ENCODE measurements at regions of chr9 and their contacts with region 1.

Region 1: GRCh38 chr9:70470050-70471015 is 55.9 kb upstream of the KLF9 start:
- DNase-seq: no peak
- ATAC-seq: peak; percentile 91

Region 2: DNA sequence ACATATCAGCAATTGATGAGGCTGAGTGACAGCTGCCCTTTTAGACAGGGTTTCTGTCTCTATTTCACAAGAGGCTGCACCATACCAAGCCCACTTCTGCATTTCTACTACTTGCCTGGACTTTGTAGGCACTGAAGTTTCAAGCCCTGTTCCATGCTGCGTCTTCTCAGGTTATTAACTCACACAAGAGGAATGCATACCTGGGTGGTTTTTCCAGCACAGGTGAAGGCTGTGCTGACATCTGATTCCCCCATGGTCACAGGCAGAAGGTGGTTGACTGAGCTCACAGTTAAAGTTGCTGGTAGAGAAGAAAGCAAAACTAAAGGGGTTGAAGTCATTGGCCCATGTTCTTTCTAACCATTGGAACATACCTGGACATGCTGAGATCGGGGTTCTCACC is 340.1 kb before region 1 on chr9:
- intact Hi-C with region 1: no loop called
- DNase-seq: no peak
- ATAC-seq: no peak

Region 3: GRCh38 chr9:70258692-70259511 is 211.4 kb before region 1 on chr9 and contains the start of gene SMC5:
- intact Hi-C with region 1: no loop called
- DNase-seq: peak; percentile 95
- ATAC-seq: peak; percentile 98
- total RNA-seq, gene SMC5: 10.0 TPM

Region 4: GRCh38 chr9:70438341-70438928 is 31.9 kb before region 1 on chr9:
- intact Hi-C with region 1: loop called (anchors 2 kb)
- DNase-seq: no peak
- ATAC-seq: peak; percentile 85